ENCODE measurements at regions of chr19 and their contacts with region 1.

Region 1: DNA sequence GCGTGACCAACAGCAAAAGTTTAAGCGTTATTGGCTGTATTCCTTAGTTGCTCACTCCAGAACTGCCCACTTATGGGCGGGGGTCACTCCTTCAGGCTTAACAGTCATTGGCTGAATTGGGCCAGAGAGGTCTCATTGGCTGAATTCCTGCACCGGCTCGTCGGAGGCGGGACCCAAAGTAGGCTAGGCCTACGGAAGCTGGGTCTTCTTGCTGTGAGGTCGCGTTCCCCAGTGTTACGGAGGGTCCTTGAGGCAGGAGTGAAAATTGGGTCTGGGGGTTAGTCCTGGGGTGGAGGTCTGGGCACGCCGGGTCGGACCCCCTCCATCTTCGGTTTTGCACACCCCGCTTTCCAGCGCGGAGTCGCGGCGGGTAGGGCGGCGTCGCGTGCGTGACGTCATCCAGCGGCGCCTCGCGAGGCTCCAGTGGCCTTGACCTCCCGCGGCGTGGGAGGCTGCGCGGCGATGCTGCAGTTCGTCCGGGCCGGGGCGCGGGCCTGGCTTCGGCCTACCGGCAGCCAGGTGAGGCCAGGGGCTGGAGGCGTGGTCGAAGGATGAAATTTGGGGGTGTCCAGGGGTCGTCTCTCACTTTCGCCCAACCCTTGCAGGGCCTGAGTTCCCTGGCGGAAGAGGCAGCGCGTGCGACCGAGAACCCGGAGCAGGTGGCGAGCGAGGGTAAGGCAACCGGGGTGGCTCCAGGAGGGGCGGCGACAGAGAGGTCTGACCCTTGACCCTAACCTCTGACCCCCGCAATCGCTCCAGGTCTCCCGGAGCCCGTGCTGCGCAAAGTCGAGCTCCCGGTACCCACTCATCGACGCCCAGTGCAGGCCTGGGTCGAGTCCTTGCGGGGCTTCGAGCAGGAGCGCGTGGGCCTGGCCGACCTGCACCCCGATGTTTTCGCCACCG is at the start of gene MRPL4:
- DNase-seq: peak; percentile 98
- H3K27ac ChIP-seq: peak within 1 kb of the TSS; percentile 79
- CTCF ChIP-seq: no peak

Region 2: GRCh38 chr19:10228920-10229319 is 23.1 kb before region 1 on chr19:
- CTCF ChIA-PET with region 1: interaction called, 12 read pairs
- POLR2A ChIA-PET with region 1: no interaction called
- DNase-seq: peak; percentile 35
- H3K27ac ChIP-seq: no peak overlapping the region
- CTCF ChIP-seq: peak; percentile 43

Measured in RWPE1 (cell line).